ENCODE measurements at regions of chr12 and their contacts with region 1.

Region 1: GRCh38 chr12:53938326-53939140 is at the start of gene HOXC13:
- DNase-seq: peak; percentile 33
- ATAC-seq: peak; percentile 23; the same call in 1 of the 3 replicates
- H3K4me3 ChIP-seq: no peak within 1 kb of the TSS
- H3K27ac ChIP-seq: no peak within 1 kb of the TSS
- H3K4me1 ChIP-seq: no peaks in the 10 kb centered on the region
- H3K27me3 ChIP-seq: peaks cover 7 to 87% of the 10 kb centered on the region in 2 experiments; a peak in 4 of 5 replicates
- CTCF ChIP-seq: no peak
- EP300 ChIP-seq: no peak
- POLR2A ChIP-seq: no peak
- RAD21 ChIP-seq: no peak
- total RNA-seq, gene HOXC13: 0.07 TPM in 2 replicates

Region 2: DNA sequence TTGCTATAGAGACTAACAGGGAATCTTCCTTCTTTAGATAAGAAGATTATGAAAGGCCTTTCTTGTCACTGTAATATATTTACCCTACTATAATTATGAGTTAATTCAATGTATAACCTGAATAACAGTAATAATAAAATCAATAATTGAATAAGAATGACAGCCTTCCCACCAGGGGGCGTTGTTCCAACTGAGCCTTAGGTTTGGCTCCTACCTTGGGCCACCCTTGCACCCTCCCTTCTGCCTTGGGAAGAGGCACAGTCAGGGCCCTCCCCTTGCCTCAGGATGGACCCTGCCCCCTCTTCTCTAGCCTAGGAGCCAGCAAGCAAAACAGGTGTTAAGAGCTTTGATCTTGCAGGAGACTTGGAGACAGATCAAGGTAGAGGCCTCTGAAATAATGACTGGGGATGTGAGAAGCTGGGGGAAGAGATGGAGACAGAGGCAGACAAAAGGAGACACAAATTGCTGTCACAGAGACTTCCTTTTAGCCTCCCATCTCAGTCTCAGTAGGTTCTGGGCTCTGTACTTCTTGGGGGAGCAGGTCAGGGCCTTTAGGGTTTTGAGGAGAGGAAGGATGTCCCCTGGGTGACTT is 146.7 kb before region 1 on chr12:
- CTCF ChIA-PET with region 1: no interaction called
- POLR2A ChIA-PET with region 1: no interaction called
- in situ Hi-C with region 1: loop called (anchors 25 kb)
- intact Hi-C with region 1: no loop called
- DNase-seq: no peak
- ATAC-seq: no peak
- H3K4me3 ChIP-seq: no peak overlapping the region
- H3K27ac ChIP-seq: no peak overlapping the region
- H3K4me1 ChIP-seq: peaks cover 1% of the 10 kb centered on the region
- H3K27me3 ChIP-seq: peaks cover 0 to 3% of the 10 kb centered on the region in 2 experiments; a peak in 2 of 5 replicates
- CTCF ChIP-seq: peak; percentile 60
- EP300 ChIP-seq: no peak
- POLR2A ChIP-seq: no peak
- RAD21 ChIP-seq: peak; percentile 36; the same call in 1 of the 2 replicates